Mammary epithelial cell (primary cell): ENCODE measurements at regions of chr6 and their contacts with region 1.

Region 1: DNA sequence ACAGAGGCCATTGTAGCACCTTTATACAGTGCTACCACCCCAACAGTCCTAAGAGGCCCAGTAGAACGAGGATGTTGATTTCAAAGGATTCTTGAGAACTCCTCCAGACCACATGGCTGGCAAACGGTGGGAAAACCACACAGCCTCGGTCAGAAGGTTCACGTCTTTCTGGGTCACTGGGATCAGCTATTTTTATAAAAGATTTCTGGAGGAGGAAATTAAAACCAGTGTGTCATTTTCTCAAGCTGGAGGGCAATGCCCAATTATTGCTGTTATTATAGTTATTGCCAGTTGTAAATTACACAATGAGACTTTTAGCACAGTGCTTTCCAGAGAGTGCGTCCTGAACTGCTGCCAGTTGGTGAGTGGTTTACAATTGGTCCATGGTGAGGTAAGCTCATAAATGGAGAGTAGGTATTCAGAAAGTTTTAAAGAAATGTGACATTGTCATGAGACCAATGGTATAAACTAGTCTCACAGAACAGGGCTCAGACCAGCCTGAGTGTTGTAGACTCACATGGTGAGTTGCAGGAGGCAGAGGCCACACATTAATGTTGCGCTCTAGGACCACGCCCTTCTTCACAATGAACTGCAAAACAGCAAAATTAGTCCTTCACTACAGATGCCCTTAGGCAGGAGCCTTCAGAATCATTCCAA is 8.4 kb upstream of the PPP1R14C start:
- DNase-seq: peak; percentile 24
- H3K4me3 ChIP-seq: no peak overlapping the region
- H3K27ac ChIP-seq: no peak overlapping the region
- H3K4me1 ChIP-seq: no peaks in the 10 kb centered on the region
- H3K27me3 ChIP-seq: no peaks in the 10 kb centered on the region
- CTCF ChIP-seq: no peak

Region 2: DNA sequence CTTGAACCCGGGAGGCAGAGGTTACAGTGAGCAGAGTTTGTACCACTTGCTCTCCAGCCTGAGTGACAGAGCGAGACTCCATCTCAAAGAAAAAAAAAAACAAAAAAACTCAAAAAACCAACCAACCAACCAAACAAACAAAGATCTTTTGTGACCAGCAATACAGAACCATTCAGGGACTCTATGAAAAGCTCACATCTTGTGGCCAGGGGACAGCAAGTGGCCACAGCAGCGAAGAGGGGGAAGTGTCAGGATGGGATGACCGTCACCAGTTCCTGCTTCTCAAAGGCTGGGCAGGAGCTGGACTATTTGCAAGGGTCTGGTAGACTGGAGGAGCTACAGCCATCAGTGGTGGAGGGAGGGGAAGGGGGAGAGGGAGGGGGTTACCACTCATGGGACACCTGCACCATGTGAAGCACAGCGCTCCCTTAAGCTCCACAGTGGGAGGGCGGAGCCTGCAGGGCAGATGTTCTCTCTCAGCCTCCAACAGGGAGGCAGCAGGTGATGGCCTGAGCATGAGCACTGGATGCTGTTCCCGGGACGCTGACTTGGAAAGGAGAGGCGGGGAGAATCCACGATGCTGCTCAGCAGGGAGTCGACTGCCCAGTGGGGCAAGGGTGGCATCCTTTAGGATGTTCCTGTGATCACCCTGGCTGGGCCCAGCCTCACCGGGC is 45.8 kb before region 1 on chr6:
- CTCF ChIA-PET with region 1: no interaction called
- dilution Hi-C with region 1: no loop called
- in situ Hi-C with region 1: no loop called
- intact Hi-C with region 1: loop called (anchors 1 kb)
- DNase-seq: no peak
- H3K4me3 ChIP-seq: no peak overlapping the region
- H3K27ac ChIP-seq: no peak overlapping the region
- H3K4me1 ChIP-seq: peaks cover 14% of the 10 kb centered on the region
- H3K27me3 ChIP-seq: no peaks in the 10 kb centered on the region
- CTCF ChIP-seq: no peak

Region 3: GRCh38 chr6:150169609-150170008 is 35.2 kb after region 1 on chr6:
- CTCF ChIA-PET with region 1: no interaction called
- dilution Hi-C with region 1: loop called (anchors 5 kb)
- in situ Hi-C with region 1: no loop called
- intact Hi-C with region 1: no loop called
- DNase-seq: peak; percentile 92
- H3K4me3 ChIP-seq: no peak overlapping the region
- H3K27ac ChIP-seq: peak overlapping the region; percentile 46
- H3K4me1 ChIP-seq: peaks cover 21% of the 10 kb centered on the region
- H3K27me3 ChIP-seq: no peaks in the 10 kb centered on the region
- CTCF ChIP-seq: no peak

Region 4: GRCh38 chr6:150195996-150196417 is 61.6 kb after region 1 on chr6:
- CTCF ChIA-PET with region 1: no interaction called
- dilution Hi-C with region 1: no loop called
- in situ Hi-C with region 1: no loop called
- intact Hi-C with region 1: no loop called
- DNase-seq: no peak
- H3K4me3 ChIP-seq: no peak overlapping the region
- H3K27ac ChIP-seq: no peak overlapping the region
- H3K4me1 ChIP-seq: peaks cover 23% of the 10 kb centered on the region
- H3K27me3 ChIP-seq: no peaks in the 10 kb centered on the region
- CTCF ChIP-seq: no peak